ENCODE measurements at regions of chr1 and their contacts with region 1.

Region 1: DNA sequence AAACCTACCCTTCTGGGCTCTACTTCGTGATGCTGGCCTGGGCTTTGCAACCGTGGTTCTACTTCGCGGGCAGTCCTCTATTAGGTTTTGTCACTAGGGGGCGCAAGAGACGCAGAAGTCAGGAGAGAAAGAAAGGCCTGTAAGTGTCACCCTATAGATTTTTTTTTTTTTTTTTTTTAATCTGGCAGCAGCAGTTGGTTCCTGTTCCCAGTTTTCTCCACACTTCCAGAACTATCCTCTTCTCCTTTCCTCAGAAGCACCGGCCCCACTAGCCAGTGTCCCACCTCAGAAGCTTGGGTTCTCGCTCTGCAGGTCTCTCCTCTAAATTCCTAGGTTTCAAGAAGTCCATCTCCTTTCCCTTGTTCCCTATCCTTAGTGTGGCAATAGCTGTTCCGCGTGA is 9.1 kb upstream of the LCE2D start:
- DNase-seq: peak; percentile 72 to 83
- H3K4me3 ChIP-seq: no peak overlapping the region
- H3K4me3 Mint-ChIP-seq: no peak overlapping the region
- H3K27ac Mint-ChIP-seq: no peak overlapping the region
- H3K4me1 ChIP-seq: no peaks in the 10 kb centered on the region
- H3K4me1 Mint-ChIP-seq: no peaks in the 10 kb centered on the region
- H3K27me3 ChIP-seq: no peaks in the 10 kb centered on the region; the same call in none of the 2 replicates
- H3K27me3 Mint-ChIP-seq: peaks cover 12% of the 10 kb centered on the region
- CTCF ChIP-seq: peak; percentile 66 to 91

Region 2: GRCh38 chr1:152735648-152736047 is 81.5 kb after region 1 on chr1:
- CTCF ChIA-PET with region 1: interaction called, 4 read pairs
- POLR2A ChIA-PET with region 1: no interaction called
- intact Hi-C with region 1: loop called (anchors 1 kb)
- DNase-seq: peak in 1 of 2 experiments; percentile 32
- H3K4me3 ChIP-seq: no peak overlapping the region
- H3K4me3 Mint-ChIP-seq: no peak overlapping the region
- H3K27ac Mint-ChIP-seq: no peak overlapping the region
- H3K4me1 ChIP-seq: no peaks in the 10 kb centered on the region
- H3K4me1 Mint-ChIP-seq: no peaks in the 10 kb centered on the region
- H3K27me3 ChIP-seq: no peaks in the 10 kb centered on the region; the same call in 1 of the 2 replicates
- H3K27me3 Mint-ChIP-seq: peaks cover 10% of the 10 kb centered on the region
- CTCF ChIP-seq: peak; percentile 54 to 79

Region 3: DNA sequence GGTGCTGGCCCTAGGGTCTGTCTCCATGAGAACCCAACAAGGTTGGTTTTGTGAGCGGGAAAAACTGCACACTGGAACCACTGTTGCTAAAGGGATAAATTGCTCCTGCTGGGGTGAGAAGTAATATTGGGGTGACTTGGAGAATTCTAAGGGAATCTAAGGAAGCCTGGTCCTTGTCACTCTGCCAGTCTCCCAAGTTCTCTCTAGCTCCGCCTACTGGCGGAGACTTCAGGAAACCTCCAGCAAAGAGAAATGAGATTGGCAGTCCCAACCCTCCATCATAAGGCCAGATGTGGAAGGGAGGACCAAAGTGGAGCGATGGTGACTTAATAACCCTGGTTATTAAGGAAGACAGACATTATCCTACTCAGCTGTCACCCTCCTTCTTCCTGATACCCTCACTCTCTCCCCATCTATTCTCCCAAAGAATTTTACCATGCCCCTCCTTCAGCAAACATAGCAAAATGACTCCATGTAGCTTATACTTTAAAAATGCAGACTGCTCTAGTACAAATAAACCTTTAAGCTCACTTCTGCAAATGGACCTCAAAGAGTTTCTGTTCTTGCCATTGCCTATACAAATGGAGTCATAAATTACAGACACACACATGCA is 123.5 kb after region 1 on chr1:
- CTCF ChIA-PET with region 1: no interaction called
- POLR2A ChIA-PET with region 1: no interaction called
- intact Hi-C with region 1: loop called (anchors 5 kb)
- DNase-seq: peak in 1 of 2 experiments; percentile 44
- H3K4me3 ChIP-seq: no peak overlapping the region
- H3K4me3 Mint-ChIP-seq: no peak overlapping the region
- H3K27ac Mint-ChIP-seq: no peak overlapping the region
- H3K4me1 ChIP-seq: no peaks in the 10 kb centered on the region
- H3K4me1 Mint-ChIP-seq: no peaks in the 10 kb centered on the region
- H3K27me3 ChIP-seq: no peaks in the 10 kb centered on the region
- H3K27me3 Mint-ChIP-seq: peaks cover 11% of the 10 kb centered on the region
- CTCF ChIP-seq: peak; percentile 19 to 45

Region 4: DNA sequence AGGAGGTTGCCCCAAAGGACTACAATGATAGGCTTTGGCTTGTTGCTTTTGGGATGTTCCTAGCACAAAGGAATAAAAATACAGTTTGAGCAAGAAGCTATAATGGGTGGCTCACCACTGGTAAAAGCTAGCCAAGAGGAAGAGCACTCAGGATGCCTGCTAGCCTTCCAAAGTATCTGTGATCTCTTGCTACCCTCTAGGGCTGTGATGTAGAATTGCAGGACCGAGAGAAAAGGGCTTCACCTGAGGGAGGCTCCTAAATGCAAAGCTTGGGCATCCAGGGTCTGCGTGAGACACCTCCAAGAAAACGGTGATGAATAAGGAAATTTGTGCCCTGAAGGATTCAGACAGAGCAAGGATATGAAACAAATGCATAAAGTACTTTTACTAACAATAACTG is 272.0 kb after region 1 on chr1:
- CTCF ChIA-PET with region 1: no interaction called
- POLR2A ChIA-PET with region 1: no interaction called
- intact Hi-C with region 1: loop called (anchors 10 kb)
- DNase-seq: peak in 1 of 2 experiments; percentile 19
- H3K4me3 ChIP-seq: no peak overlapping the region
- H3K4me3 Mint-ChIP-seq: no peak overlapping the region
- H3K27ac Mint-ChIP-seq: no peak overlapping the region
- H3K4me1 ChIP-seq: no peaks in the 10 kb centered on the region
- H3K4me1 Mint-ChIP-seq: peaks cover 7% of the 10 kb centered on the region
- H3K27me3 ChIP-seq: no peaks in the 10 kb centered on the region
- H3K27me3 Mint-ChIP-seq: peaks cover 9% of the 10 kb centered on the region
- CTCF ChIP-seq: peak; percentile 20 to 34

Region 5: DNA sequence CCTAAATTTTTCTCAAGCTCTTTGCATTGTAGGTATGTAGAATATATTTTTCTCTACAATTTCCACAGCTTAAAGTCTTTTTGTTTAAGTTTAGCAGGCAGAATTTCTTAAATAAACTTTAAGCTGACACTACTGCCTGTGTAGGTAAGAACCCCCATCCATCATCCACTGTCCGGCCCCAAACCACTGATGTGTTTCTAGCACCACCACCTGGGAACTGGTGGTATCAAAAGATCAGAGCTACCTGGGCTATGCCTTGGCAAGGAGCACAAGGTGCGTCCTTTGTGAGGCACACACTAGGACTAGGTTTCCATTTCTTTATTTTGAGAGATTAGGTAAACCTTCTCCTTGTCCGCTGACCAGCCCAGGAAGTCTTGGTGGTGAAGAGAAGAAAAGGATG is 538.6 kb after region 1 on chr1:
- CTCF ChIA-PET with region 1: interaction called, 3 read pairs
- POLR2A ChIA-PET with region 1: no interaction called
- intact Hi-C with region 1: loop called (anchors 2 kb)
- DNase-seq: peak; percentile 46 to 57
- H3K4me3 ChIP-seq: no peak overlapping the region
- H3K4me3 Mint-ChIP-seq: no peak overlapping the region
- H3K27ac Mint-ChIP-seq: no peak overlapping the region
- H3K4me1 ChIP-seq: no peaks in the 10 kb centered on the region
- H3K4me1 Mint-ChIP-seq: no peaks in the 10 kb centered on the region
- H3K27me3 ChIP-seq: no peaks in the 10 kb centered on the region; the same call in 1 of the 2 replicates
- H3K27me3 Mint-ChIP-seq: peaks cover 23% of the 10 kb centered on the region
- CTCF ChIP-seq: peak in 1 of 2 experiments; percentile 65

Measured in Caco-2 (cell line).